ENCODE measurements at regions of chr7 and their contacts with region 1.

Region 1: GRCh38 chr7:100081535-100082102 is at the start of gene ZNF3:
- DNase-seq: peak; percentile 100
- H3K4me3 ChIP-seq: peak within 1 kb of the TSS; percentile 97 to 99 (median 98)
- H3K27ac ChIP-seq: peak within 1 kb of the TSS; percentile 87 to 92 (median 88)
- H3K4me1 ChIP-seq: peaks cover 29 to 44% (median 41%) of the 10 kb centered on the region in 4 donors
- H3K27me3 ChIP-seq: no peaks in the 10 kb centered on the region
- CTCF ChIP-seq: peak; percentile 93 to 95 (median 94)
- EP300 ChIP-seq: no peak
- POLR2A ChIP-seq: peak; percentile 43
- total RNA-seq, gene ZNF3: 15.6 to 25.3 (median 20.7) TPM

Region 2: GRCh38 chr7:99918959-99919813 is 162.4 kb before region 1 on chr7 and contains the start of gene TRIM4:
- intact Hi-C with region 1: loop called (anchors 10 kb)
- DNase-seq: peak; percentile 96
- H3K4me3 ChIP-seq: peak within 1 kb of the TSS; percentile 77 to 96 (median 94)
- H3K27ac ChIP-seq: peak within 1 kb of the TSS; percentile 87 to 99 (median 98)
- H3K4me1 ChIP-seq: peaks cover 26 to 57% (median 52%) of the 10 kb centered on the region in 4 donors
- H3K27me3 ChIP-seq: no peaks in the 10 kb centered on the region
- CTCF ChIP-seq: peak in 2 of 3 experiments; percentile 21 to 23
- EP300 ChIP-seq: no peak
- POLR2A ChIP-seq: peak; percentile 83
- total RNA-seq, gene TRIM4: 21.2 to 27.8 (median 24.7) TPM

Region 3: DNA sequence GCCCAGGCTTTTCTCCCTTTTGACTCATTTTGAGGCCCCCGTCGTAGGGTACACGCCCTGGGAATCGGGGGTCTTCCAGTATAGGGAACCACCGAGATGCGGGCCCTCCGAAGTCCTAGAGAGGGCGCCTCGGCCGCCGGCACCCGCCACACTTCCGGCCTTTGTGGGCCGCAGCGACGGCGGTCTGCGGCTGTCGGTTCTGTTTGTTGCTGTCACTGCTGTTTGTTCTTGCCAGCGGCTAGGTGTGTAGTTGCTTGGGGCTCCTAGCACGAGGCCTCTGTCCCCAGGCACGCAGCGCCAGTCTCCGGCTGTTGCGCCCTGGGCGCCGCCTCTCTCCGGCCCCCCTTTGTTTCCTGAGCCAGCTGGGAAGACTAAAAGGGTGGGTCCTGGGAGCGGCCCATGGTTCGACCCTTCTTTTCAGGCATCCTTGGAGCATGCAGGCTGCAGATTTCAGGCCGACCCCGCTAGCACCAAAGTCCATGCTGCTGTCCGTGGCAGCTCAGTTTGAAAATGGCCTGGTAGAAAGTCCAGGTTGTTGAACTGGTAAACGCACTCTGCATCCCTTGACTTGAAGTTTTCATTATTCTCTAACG is 84.0 kb before region 1 on chr7:
- intact Hi-C with region 1: loop called (anchors 10 kb)
- DNase-seq: no peak
- H3K4me3 ChIP-seq: peak overlapping the region; percentile 56 to 63 (median 58)
- H3K27ac ChIP-seq: peak overlapping the region; percentile 61 to 79 (median 71)
- H3K4me1 ChIP-seq: peaks cover 11 to 25% (median 23%) of the 10 kb centered on the region in 4 donors
- H3K27me3 ChIP-seq: no peaks in the 10 kb centered on the region
- CTCF ChIP-seq: peak; percentile 20 to 60 (median 29)
- EP300 ChIP-seq: no peak
- POLR2A ChIP-seq: no peak

Region 4: DNA sequence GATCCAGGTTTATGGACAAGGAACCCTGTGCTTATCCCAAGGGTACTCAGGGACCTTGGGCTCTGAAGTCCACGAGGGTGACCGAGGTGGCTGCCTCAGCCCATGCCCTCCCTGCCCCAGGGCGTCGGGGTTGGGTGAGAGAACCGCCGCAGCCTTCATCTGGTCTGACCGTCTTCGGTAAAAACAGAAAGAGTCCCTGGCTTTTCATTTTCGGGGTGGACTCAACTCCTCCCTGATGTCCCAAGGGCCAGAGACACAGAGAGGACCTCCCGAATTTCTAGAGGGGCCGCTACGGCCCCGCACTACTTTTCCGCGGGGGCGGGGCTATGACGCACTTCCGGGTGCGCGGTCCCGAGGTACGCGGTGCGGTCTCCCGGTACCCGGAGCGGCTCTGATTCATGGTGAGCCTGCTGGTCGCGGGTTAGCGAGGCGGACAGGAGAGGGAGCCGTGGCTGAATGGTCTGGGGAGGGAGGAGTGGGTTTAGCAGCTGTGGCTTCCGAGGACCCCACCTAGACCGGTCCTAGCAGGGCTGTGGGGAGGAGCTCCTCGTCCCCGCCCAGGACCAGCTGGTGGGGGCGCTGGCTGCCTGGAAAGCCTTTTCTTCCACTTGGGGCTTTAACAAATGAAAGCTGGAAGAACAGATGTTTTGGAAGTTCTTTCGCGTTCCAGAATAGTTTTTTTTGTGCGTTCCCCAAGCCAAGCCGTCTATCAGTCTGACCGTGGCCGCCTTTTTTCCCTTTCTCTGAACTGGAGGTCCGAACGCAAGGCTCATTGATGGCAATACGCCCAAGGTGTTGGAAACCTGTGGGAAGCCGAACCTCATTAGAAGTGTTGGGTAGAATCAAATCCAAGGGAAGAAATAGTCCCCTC is 31.9 kb before region 1 on chr7 and contains the start of gene ZSCAN21:
- intact Hi-C with region 1: loop called (anchors 1 kb)
- DNase-seq: peak; percentile 96
- H3K4me3 ChIP-seq: peak within 1 kb of the TSS; percentile 72 to 85 (median 82)
- H3K27ac ChIP-seq: peak within 1 kb of the TSS; percentile 92 to 98 (median 96)
- H3K4me1 ChIP-seq: peaks cover 6 to 40% (median 28%) of the 10 kb centered on the region in 4 donors
- H3K27me3 ChIP-seq: no peaks in the 10 kb centered on the region
- CTCF ChIP-seq: peak in 2 of 3 experiments; percentile 8 to 12
- EP300 ChIP-seq: no peak
- POLR2A ChIP-seq: peak; percentile 65
- total RNA-seq, gene ZSCAN21: 12.9 to 18.4 (median 16.1) TPM

Region 5: GRCh38 chr7:100126931-100127865 is 45.6 kb after region 1 on chr7 and contains the start of gene MBLAC1:
- intact Hi-C with region 1: loop called (anchors 5 kb)
- DNase-seq: peak; percentile 97
- H3K4me3 ChIP-seq: peak within 1 kb of the TSS; percentile 78 to 99 (median 95)
- H3K27ac ChIP-seq: peak within 1 kb of the TSS; percentile 92 to 97 (median 96)
- H3K4me1 ChIP-seq: peaks cover 24 to 47% (median 39%) of the 10 kb centered on the region in 4 donors
- H3K27me3 ChIP-seq: no peaks in the 10 kb centered on the region
- CTCF ChIP-seq: peak in 1 of 3 experiments; percentile 16
- EP300 ChIP-seq: no peak
- POLR2A ChIP-seq: no peak
- total RNA-seq, gene MBLAC1: 3.1 to 8.8 (median 5.0) TPM

Measured in esophagus muscularis mucosa (tissue), 4 donors.